Mammary epithelial cell (primary cell): ENCODE measurements at regions of chr16 and their contacts with region 1.

Region 1: DNA sequence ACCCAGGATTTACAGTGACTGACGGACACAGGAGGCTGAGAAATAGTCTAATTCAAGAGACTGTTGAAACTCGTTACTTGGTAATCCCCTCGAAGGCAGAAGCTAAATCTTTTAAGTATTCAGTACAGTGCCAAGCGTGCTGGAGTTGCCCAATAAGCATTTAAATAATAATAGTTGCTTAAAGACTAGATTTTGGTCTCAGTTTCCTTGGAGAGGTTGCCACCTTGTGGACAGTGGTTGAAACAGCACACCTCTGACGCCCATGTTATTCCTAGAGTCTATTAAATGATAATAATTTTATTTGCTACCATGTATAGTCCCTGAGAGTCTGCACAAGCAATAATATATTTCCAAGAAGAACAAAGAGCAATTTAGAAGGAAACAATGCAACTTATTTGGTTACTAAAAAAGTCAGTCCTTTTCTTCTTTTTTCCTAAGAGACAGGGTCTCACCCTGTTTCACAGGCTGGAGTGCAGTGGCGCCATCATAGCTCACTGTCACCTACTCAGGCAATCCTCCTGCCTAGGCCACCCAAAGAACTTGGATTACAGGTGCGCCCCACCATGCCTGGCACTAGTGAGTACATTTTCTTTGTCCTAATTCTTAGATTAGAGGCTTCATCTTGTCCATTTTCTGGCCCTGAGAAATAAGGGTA is 138.0 kb upstream of the NUDT7 start:
- DNase-seq: peak; percentile 47
- H3K4me3 ChIP-seq: no peak overlapping the region
- H3K27ac ChIP-seq: no peak overlapping the region
- H3K4me1 ChIP-seq: peaks cover 11% of the 10 kb centered on the region
- H3K27me3 ChIP-seq: peaks cover 3% of the 10 kb centered on the region
- CTCF ChIP-seq: peak; percentile 82 to 85

Region 2: DNA sequence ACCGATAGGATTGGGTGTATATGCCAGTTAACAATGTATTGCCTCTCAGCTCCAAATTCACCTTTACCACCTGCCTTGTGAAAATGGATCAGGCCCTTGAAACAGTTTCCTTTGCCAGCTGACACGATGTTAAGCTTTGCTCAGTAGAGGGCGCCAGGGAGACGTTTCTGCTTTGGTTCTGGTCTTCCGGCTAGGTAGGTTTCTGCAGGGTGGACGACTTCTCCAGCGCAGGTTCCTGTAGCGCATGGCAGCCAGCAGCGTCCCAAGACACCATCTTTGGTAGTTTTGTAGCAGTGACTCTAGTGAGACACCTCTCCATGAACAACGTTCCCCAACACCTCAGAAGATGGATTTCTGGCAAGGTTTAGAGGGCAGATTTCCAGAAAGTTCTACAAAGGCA is 361.1 kb before region 1 on chr16:
- CTCF ChIA-PET with region 1: no interaction called
- dilution Hi-C with region 1: loop called (anchors 5 kb)
- in situ Hi-C with region 1: no loop called
- intact Hi-C with region 1: no loop called
- DNase-seq: no peak
- H3K4me3 ChIP-seq: no peak overlapping the region
- H3K27ac ChIP-seq: no peak overlapping the region
- H3K4me1 ChIP-seq: no peaks in the 10 kb centered on the region
- H3K27me3 ChIP-seq: no peaks in the 10 kb centered on the region
- CTCF ChIP-seq: peak; percentile 39

Region 3: GRCh38 chr16:77298638-77299360 is 285.5 kb before region 1 on chr16:
- CTCF ChIA-PET with region 1: no interaction called
- dilution Hi-C with region 1: no loop called
- in situ Hi-C with region 1: no loop called
- intact Hi-C with region 1: loop called (anchors 5 kb)
- DNase-seq: peak; percentile 92
- H3K4me3 ChIP-seq: no peak overlapping the region
- H3K27ac ChIP-seq: peak overlapping the region; percentile 67
- H3K4me1 ChIP-seq: peaks cover 20% of the 10 kb centered on the region
- H3K27me3 ChIP-seq: no peaks in the 10 kb centered on the region
- CTCF ChIP-seq: no peak

Region 4: DNA sequence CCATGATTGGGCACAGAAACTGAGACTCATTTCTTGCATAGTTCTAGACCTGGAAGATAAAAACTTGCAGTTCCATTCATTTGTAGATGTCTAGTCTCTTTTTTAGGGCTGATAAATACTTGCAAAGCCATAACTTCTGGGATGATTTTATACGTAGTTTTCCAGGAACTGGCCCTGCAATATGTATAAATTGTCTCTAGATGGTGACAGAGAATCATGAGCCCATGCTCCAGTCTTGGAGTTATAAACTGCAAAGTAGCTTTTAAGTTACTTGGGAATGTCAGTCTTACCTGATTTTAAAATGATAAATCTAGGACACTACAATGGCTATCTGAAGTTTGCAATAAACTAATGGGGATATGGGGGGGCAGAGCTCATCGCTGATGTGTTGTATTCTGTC is 146.5 kb before region 1 on chr16:
- CTCF ChIA-PET with region 1: no interaction called
- dilution Hi-C with region 1: no loop called
- in situ Hi-C with region 1: no loop called
- intact Hi-C with region 1: loop called (anchors 5 kb)
- DNase-seq: no peak
- H3K4me3 ChIP-seq: no peak overlapping the region
- H3K27ac ChIP-seq: no peak overlapping the region
- H3K4me1 ChIP-seq: no peaks in the 10 kb centered on the region
- H3K27me3 ChIP-seq: peaks cover 5% of the 10 kb centered on the region
- CTCF ChIP-seq: no peak

Region 5: GRCh38 chr16:77636615-77637014 is 52.3 kb after region 1 on chr16:
- CTCF ChIA-PET with region 1: no interaction called
- dilution Hi-C with region 1: no loop called
- in situ Hi-C with region 1: no loop called
- intact Hi-C with region 1: no loop called
- DNase-seq: no peak
- H3K4me3 ChIP-seq: no peak overlapping the region
- H3K27ac ChIP-seq: no peak overlapping the region
- H3K4me1 ChIP-seq: no peaks in the 10 kb centered on the region
- H3K27me3 ChIP-seq: peaks cover 7% of the 10 kb centered on the region
- CTCF ChIP-seq: no peak

Region 6: GRCh38 chr16:77647726-77648125 is 63.4 kb after region 1 on chr16:
- CTCF ChIA-PET with region 1: no interaction called
- dilution Hi-C with region 1: loop called (anchors 5 kb)
- in situ Hi-C with region 1: no loop called
- intact Hi-C with region 1: no loop called
- DNase-seq: no peak
- H3K4me3 ChIP-seq: no peak overlapping the region
- H3K27ac ChIP-seq: no peak overlapping the region
- H3K4me1 ChIP-seq: no peaks in the 10 kb centered on the region
- H3K27me3 ChIP-seq: no peaks in the 10 kb centered on the region
- CTCF ChIP-seq: no peak

Region 7: DNA sequence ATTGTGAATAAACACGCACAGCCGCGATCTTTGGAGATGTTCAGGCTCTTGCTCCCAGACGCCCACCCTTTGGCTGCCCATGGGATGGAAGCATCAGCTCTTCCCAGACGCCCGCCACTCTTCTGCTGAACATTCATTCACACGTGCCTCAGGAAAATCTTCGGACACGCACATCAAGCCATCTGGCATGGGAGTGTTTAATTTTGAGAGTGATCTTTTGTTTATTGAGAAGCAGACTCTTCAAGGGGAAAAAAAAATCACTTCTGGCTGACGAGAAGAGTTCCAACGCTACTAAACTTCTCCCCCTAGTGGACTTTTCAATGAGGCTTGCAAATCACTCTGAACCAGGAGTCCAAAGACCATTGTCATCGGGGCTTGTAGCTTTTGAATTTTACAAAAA is 76.0 kb after region 1 on chr16:
- CTCF ChIA-PET with region 1: no interaction called
- dilution Hi-C with region 1: no loop called
- in situ Hi-C with region 1: no loop called
- intact Hi-C with region 1: loop called (anchors 1 kb)
- DNase-seq: peak; percentile 33
- H3K4me3 ChIP-seq: no peak overlapping the region
- H3K27ac ChIP-seq: no peak overlapping the region
- H3K4me1 ChIP-seq: no peaks in the 10 kb centered on the region
- H3K27me3 ChIP-seq: no peaks in the 10 kb centered on the region
- CTCF ChIP-seq: peak; percentile 42 to 75